ENCODE measurements at regions of chr11 and their contacts with region 1.

Region 1: DNA sequence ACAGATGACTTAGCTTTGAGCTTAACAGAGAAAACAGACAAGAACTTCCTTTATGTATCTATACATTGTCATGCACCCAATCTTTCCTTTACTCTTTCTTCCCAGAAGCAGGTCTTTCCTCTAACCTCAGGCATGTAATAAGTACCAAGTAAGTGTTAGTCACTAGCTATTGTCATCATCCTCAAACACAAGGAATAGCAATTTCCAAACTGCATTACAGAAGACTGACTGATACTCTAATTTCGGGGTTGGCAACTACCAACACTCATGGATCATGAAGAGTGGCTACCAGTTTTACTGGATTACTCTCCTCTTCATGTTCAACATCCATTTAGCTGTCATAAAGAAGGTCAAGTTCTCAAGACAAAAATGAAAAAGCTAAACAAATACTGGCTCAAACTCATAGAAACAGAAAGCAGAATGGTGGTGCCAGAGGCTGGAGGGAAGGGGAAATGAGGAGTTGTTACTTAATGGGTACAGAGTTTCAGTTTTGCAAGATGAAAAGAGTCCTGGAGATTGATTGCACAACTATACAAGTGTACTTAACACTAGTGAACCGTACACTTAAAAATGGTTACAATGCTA is 111.6 kb downstream of the SIK3 start:
- DNase-seq: peak; percentile 94
- H3K4me3 ChIP-seq: peak overlapping the region in 2 of 3 experiments; percentile 11 to 27
- H3K27ac ChIP-seq: peak overlapping the region; percentile 84
- H3K4me1 ChIP-seq: peaks cover 61% of the 10 kb centered on the region
- H3K27me3 ChIP-seq: no peaks in the 10 kb centered on the region
- CTCF ChIP-seq: no peak

Region 2: DNA sequence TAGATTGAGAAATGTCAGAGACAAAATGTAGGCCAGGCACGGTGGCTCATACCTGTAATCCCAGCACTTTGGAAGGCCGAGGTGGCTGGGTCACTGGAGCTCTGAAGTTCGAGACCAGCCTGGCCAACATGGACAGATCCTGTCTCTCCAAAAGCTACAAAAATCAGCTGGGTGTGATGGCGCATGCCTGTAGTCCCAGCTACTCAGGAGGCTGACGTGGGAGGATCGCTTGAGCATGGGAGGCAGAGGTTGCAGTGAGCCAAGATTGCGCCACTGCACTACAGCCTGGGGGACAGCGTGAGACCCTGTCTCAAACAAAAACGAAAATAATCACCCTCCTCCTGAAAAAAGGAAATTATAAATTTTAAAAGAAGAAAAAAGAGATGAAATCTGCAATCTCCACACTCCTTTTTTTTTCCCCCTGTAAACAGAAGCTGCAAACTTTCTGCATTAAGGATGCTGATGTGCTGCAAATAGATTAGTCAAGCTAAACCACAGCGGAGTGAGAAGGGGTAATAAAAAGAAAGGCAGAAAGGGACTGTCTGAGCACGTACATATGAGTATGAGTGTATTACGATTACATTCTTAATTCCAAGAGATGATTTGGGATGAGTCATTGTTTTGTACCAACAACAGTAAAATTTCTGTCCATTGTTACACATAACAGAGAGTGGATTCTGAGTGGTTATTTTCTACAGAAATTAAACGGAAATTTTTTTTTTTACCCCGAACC is 24.4 kb after region 1 on chr11:
- CTCF ChIA-PET with region 1: no interaction called
- dilution Hi-C with region 1: no loop called
- in situ Hi-C with region 1: no loop called
- intact Hi-C with region 1: loop called (anchors 2 kb)
- DNase-seq: peak; percentile 95
- H3K4me3 ChIP-seq: no peak overlapping the region
- H3K27ac ChIP-seq: peak overlapping the region; percentile 94
- H3K4me1 ChIP-seq: peaks cover 22% of the 10 kb centered on the region
- H3K27me3 ChIP-seq: no peaks in the 10 kb centered on the region
- CTCF ChIP-seq: no peak

Measured in mammary epithelial cell (primary cell).